Mammary epithelial cell (primary cell): ENCODE measurements at regions of chr10 and their contacts with region 1.

Region 1: GRCh38 chr10:122510326-122510725 is 49.0 kb downstream of the HTRA1 start:
- DNase-seq: peak; percentile 98
- H3K4me3 ChIP-seq: no peak overlapping the region
- H3K27ac ChIP-seq: peak overlapping the region; percentile 83
- H3K4me1 ChIP-seq: peaks cover 39% of the 10 kb centered on the region
- H3K27me3 ChIP-seq: no peaks in the 10 kb centered on the region
- CTCF ChIP-seq: no peak

Region 2: DNA sequence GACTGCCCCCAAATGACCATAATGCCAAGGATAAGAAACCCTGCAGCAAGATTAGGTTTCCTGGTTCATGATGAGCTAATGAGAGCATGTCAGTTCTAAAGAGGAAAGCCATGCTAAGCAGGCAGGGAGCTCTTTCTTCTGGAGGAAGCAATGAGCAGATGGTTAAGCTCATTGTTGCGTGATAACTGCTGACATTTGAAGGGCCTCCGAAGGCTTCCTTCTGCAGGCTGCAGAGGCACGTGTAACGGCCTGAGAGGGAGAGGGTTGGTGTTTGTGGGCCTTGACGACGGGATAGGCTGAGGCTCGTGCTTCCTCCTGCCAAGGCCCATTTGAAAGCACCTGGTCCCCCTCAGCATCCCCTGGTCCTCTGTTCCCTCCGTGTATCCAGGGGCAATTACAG is 302.7 kb before region 1 on chr10:
- CTCF ChIA-PET with region 1: no interaction called
- dilution Hi-C with region 1: no loop called
- in situ Hi-C with region 1: no loop called
- intact Hi-C with region 1: no loop called
- DNase-seq: no peak
- H3K4me3 ChIP-seq: no peak overlapping the region
- H3K27ac ChIP-seq: no peak overlapping the region
- H3K4me1 ChIP-seq: no peaks in the 10 kb centered on the region
- H3K27me3 ChIP-seq: no peaks in the 10 kb centered on the region
- CTCF ChIP-seq: no peak

Region 3: GRCh38 chr10:122461367-122461728 is 49.0 kb before region 1 on chr10 and contains the start of gene HTRA1:
- CTCF ChIA-PET with region 1: no interaction called
- dilution Hi-C with region 1: no loop called
- in situ Hi-C with region 1: no loop called
- intact Hi-C with region 1: loop called (anchors 1 kb)
- DNase-seq: peak; percentile 70
- H3K4me3 ChIP-seq: peak within 1 kb of the TSS; percentile 71 to 99 (median 96)
- H3K27ac ChIP-seq: peak within 1 kb of the TSS; percentile 65
- H3K4me1 ChIP-seq: peaks cover 27% of the 10 kb centered on the region
- H3K27me3 ChIP-seq: no peaks in the 10 kb centered on the region
- CTCF ChIP-seq: no peak
- total RNA-seq, gene HTRA1: 179 to 311 TPM

Region 4: GRCh38 chr10:122468926-122469781 is 41.2 kb before region 1 on chr10:
- CTCF ChIA-PET with region 1: no interaction called
- dilution Hi-C with region 1: no loop called
- in situ Hi-C with region 1: no loop called
- intact Hi-C with region 1: loop called (anchors 2 kb)
- DNase-seq: peak; percentile 99
- H3K4me3 ChIP-seq: no peak overlapping the region
- H3K27ac ChIP-seq: peak overlapping the region; percentile 58
- H3K4me1 ChIP-seq: peaks cover 65% of the 10 kb centered on the region
- H3K27me3 ChIP-seq: no peaks in the 10 kb centered on the region
- CTCF ChIP-seq: peak in 1 of 2 donors; percentile 29

Region 5: DNA sequence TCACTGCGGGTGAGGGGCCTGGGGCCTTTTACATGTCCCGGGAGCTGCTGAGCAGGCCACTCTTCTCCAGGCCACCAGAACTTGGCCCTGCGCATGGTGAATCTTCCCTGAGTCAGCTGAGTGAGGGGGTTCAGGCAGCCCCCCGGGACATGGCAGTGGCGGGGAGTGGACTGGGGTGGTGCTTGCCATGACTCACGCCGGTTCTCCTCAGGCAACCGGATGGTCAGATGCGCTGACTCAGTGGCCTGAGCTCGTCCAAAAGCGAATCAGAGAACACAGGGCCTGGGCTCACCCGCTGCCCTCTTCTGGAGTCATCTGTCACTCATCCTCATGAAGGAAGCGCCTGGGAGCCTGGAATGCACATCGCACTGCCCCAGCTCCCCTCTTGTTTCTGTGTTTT is 15.5 kb before region 1 on chr10:
- CTCF ChIA-PET with region 1: no interaction called
- dilution Hi-C with region 1: no loop called
- in situ Hi-C with region 1: no loop called
- intact Hi-C with region 1: loop called (anchors 2 kb)
- DNase-seq: peak; percentile 87
- H3K4me3 ChIP-seq: peak overlapping the region; percentile 7 to 45 (median 26)
- H3K27ac ChIP-seq: peak overlapping the region; percentile 88
- H3K4me1 ChIP-seq: peaks cover 66% of the 10 kb centered on the region
- H3K27me3 ChIP-seq: no peaks in the 10 kb centered on the region
- CTCF ChIP-seq: no peak

Region 6: GRCh38 chr10:122829454-122829853 is 319.1 kb after region 1 on chr10:
- CTCF ChIA-PET with region 1: no interaction called
- dilution Hi-C with region 1: no loop called
- in situ Hi-C with region 1: no loop called
- intact Hi-C with region 1: no loop called
- DNase-seq: no peak
- H3K4me3 ChIP-seq: no peak overlapping the region
- H3K27ac ChIP-seq: no peak overlapping the region
- H3K4me1 ChIP-seq: peaks cover 5% of the 10 kb centered on the region
- H3K27me3 ChIP-seq: peaks cover 12% of the 10 kb centered on the region
- CTCF ChIP-seq: no peak